ENCODE measurements at regions of chr5 and their contacts with region 1.

Region 1: GRCh38 chr5:36507332-36507952 is 99.0 kb upstream of the SLC1A3 start:
- DNase-seq: peak; percentile 56
- ATAC-seq: peak; percentile 28
- H3K4me3 Mint-ChIP-seq: no peak overlapping the region
- H3K27ac Mint-ChIP-seq: no peak overlapping the region
- H3K4me1 Mint-ChIP-seq: no peaks in the 10 kb centered on the region
- H3K27me3 Mint-ChIP-seq: peaks cover 13% of the 10 kb centered on the region
- CTCF ChIP-seq: peak; percentile 48

Region 2: GRCh38 chr5:36079200-36079761 is 428.2 kb before region 1 on chr5:
- CTCF ChIA-PET with region 1: interaction called, 10 read pairs
- POLR2A ChIA-PET with region 1: no interaction called
- intact Hi-C with region 1: no loop called
- DNase-seq: no peak
- ATAC-seq: peak; percentile 73
- H3K4me3 Mint-ChIP-seq: no peak overlapping the region
- H3K27ac Mint-ChIP-seq: no peak overlapping the region
- H3K4me1 Mint-ChIP-seq: no peaks in the 10 kb centered on the region
- H3K27me3 Mint-ChIP-seq: peaks cover 16% of the 10 kb centered on the region
- CTCF ChIP-seq: no peak

Region 3: DNA sequence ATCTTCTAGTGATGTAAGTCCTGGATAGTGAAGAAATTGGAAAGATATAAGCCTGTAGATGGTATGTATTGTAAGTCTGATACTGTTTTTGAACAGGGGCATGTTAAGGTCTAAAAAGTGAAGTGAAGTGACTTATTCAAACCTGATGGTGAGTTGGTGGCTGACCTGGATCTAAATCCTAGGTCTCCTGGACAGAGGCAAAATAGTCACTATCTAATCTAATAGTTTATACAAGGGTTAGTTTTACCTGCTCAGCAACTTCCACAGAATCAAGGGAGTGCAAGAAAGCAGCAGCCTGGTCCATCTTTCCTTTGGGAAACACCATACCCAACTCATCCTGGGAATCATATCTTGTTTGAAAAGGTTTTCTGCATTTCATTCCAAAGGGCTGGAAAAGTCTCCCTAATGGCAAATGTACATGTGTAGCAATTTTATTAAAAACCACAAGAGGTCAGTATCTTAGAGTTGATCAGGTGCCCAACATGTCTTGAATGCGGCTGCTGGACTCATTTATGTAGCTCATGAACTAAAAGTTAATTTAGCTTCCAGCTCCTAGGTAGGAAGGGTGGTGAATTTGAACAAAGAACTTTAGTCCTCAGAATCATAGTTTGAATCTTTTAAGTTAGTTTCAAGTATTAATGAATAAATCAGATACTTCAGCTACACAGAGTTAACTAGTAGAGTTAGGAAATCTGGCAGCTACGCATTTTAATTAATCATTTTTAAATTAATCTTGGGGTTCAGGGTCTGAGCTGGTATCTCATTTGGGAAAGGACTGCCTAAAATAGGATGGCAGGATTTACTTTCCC is 329.5 kb before region 1 on chr5:
- CTCF ChIA-PET with region 1: interaction called, 10 read pairs
- POLR2A ChIA-PET with region 1: no interaction called
- intact Hi-C with region 1: loop called (anchors 1 kb)
- DNase-seq: no peak
- ATAC-seq: no peak
- H3K4me3 Mint-ChIP-seq: no peak overlapping the region
- H3K27ac Mint-ChIP-seq: no peak overlapping the region
- H3K4me1 Mint-ChIP-seq: peaks cover 4% of the 10 kb centered on the region
- H3K27me3 Mint-ChIP-seq: no peaks in the 10 kb centered on the region
- CTCF ChIP-seq: no peak

Region 4: DNA sequence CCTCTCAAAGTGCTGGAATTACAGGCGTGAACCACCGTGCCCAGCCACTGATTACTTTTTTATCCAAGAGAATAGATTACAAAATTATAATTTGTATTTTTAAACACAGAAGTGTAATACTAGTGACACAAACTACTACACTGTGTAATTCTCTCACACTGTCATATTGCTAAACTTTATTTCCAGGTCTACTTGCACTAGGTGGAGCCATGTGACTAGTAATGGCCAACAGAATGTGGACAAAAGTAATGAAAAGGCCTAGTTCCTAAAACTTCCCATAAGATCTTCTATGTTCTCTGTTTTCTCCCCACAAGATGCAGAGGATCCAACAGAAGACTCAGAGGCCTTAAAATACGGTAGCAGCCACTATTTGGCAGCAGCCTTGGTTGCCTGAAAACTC is 293.0 kb before region 1 on chr5:
- CTCF ChIA-PET with region 1: interaction called, 4 read pairs
- POLR2A ChIA-PET with region 1: no interaction called
- intact Hi-C with region 1: loop called (anchors 1 kb)
- DNase-seq: no peak
- ATAC-seq: no peak
- H3K4me3 Mint-ChIP-seq: no peak overlapping the region
- H3K27ac Mint-ChIP-seq: no peak overlapping the region
- H3K4me1 Mint-ChIP-seq: no peaks in the 10 kb centered on the region
- H3K27me3 Mint-ChIP-seq: no peaks in the 10 kb centered on the region
- CTCF ChIP-seq: no peak

Region 5: GRCh38 chr5:36264202-36264760 is 243.2 kb before region 1 on chr5:
- CTCF ChIA-PET with region 1: interaction called, 17 read pairs
- POLR2A ChIA-PET with region 1: no interaction called
- intact Hi-C with region 1: loop called (anchors 1 kb)
- DNase-seq: no peak
- ATAC-seq: no peak
- H3K4me3 Mint-ChIP-seq: no peak overlapping the region
- H3K27ac Mint-ChIP-seq: no peak overlapping the region
- H3K4me1 Mint-ChIP-seq: no peaks in the 10 kb centered on the region
- H3K27me3 Mint-ChIP-seq: peaks cover 5% of the 10 kb centered on the region
- CTCF ChIP-seq: no peak

Region 6: DNA sequence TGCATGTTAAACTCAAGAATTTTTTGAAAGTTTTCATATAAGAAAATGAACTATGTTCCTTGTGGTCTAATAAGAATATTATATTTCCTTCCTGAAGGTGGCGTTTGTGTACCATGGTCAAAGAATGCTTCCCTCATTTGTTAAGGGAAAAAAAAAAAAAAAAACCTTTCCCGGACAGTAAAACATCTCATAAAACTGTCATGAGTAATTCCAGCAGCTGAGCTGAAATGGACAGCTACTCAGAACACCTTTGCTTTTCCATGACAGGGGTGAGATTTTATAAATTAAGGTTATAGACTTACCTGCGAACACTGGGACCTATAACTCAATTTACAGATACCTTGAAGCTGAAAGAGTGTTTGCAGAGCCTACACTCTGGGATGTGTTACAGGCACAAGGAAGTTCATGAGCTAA is 92.6 kb before region 1 on chr5:
- CTCF ChIA-PET with region 1: interaction called, 3 read pairs
- POLR2A ChIA-PET with region 1: no interaction called
- intact Hi-C with region 1: loop called (anchors 1 kb)
- DNase-seq: no peak
- ATAC-seq: no peak
- H3K4me3 Mint-ChIP-seq: no peak overlapping the region
- H3K27ac Mint-ChIP-seq: no peak overlapping the region
- H3K4me1 Mint-ChIP-seq: peaks cover 3% of the 10 kb centered on the region
- H3K27me3 Mint-ChIP-seq: peaks cover 4% of the 10 kb centered on the region
- CTCF ChIP-seq: no peak

Region 7: GRCh38 chr5:36777105-36777757 is 269.8 kb after region 1 on chr5:
- CTCF ChIA-PET with region 1: no interaction called
- POLR2A ChIA-PET with region 1: no interaction called
- intact Hi-C with region 1: no loop called
- DNase-seq: no peak
- ATAC-seq: no peak
- H3K4me3 Mint-ChIP-seq: no peak overlapping the region
- H3K27ac Mint-ChIP-seq: no peak overlapping the region
- H3K4me1 Mint-ChIP-seq: no peaks in the 10 kb centered on the region
- H3K27me3 Mint-ChIP-seq: peaks cover 16% of the 10 kb centered on the region
- CTCF ChIP-seq: no peak

Measured in activated B cell treated with CpG ODN at 0.5 μM for 24 hours (primary cell).